ENCODE measurements at regions of chr2 and their contacts with region 1.

Region 1: DNA sequence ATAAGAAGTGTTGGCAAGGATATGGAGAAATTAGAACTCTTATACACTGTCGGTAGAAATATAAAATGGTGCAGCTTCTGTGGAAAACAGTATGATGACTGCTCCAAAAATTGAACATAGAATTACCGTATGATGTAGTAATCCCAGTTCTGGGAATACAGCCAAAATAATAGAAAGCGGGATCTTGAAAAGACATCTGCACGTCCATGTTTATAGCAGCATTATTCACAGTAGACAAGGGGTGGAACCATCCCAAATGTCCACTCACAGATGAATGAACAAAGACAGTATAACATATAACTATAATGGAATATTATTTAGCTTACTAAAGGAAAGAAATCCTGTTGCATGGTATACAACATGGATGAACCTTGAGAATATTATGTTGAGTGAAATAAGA is 257.7 kb downstream of the TDRD15 start:
- DNase-seq: no peak
- H3K4me3 ChIP-seq: no peak overlapping the region
- H3K27ac ChIP-seq: no peak overlapping the region
- H3K4me1 ChIP-seq: no peaks in the 10 kb centered on the region
- H3K27me3 ChIP-seq: no peaks in the 10 kb centered on the region
- CTCF ChIP-seq: no peak
- EP300 ChIP-seq: no peak
- RAD21 ChIP-seq: no peak

Region 2: GRCh38 chr2:20868377-20868776 is 513.0 kb before region 1 on chr2:
- CTCF ChIA-PET with region 1: no interaction called
- POLR2A ChIA-PET with region 1: no interaction called
- DNase-seq: no peak
- H3K4me3 ChIP-seq: no peak overlapping the region
- H3K27ac ChIP-seq: no peak overlapping the region
- H3K4me1 ChIP-seq: no peaks in the 10 kb centered on the region
- H3K27me3 ChIP-seq: no peaks in the 10 kb centered on the region
- CTCF ChIP-seq: no peak
- EP300 ChIP-seq: no peak
- RAD21 ChIP-seq: no peak

Region 3: DNA sequence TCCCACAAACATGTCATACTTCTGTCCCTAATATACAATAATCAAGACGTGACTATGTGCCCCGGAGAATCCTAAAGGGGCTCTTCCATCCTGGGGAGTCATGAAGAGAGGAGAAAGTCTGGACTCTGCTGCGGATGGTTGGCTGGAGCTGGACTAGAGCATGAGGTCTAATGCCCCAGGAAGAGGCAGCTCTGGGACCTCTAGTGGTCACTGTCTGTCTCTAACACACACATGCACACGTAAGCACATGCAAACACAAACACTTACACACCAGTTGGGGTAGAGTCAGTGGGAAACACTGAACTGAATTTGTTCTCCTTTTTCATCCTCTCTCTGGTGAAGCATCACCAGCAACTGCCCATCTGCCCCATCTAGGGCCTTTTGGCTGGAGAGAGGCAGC is 13.9 kb after region 1 on chr2:
- CTCF ChIA-PET with region 1: interaction called, 30 read pairs
- POLR2A ChIA-PET with region 1: no interaction called
- DNase-seq: peak; percentile 29
- H3K4me3 ChIP-seq: no peak overlapping the region
- H3K27ac ChIP-seq: no peak overlapping the region
- H3K4me1 ChIP-seq: peaks cover 0 to 6% of the 10 kb centered on the region in 2 experiments; a peak in 1 of 4 replicates
- H3K27me3 ChIP-seq: no peaks in the 10 kb centered on the region
- CTCF ChIP-seq: no peak
- EP300 ChIP-seq: no peak
- RAD21 ChIP-seq: peak; percentile 61

Region 4: DNA sequence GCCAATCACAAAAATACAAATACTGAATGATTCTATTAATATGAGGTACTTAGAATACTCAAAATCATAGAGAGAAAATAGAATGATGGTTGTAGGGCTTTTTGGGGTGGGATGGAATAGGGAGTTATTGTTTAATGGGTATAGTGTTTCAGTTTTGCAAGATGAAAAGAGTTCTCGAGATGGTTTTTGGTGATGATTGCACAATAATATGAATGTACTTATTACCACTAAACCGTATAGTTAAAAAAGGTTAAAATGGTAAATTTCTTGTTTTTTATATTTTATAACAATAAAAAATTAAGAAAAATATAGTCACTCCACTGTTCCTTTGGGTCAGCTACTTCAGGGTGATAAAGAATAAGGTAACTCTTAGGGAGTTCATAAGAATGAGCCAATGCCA is 302.4 kb after region 1 on chr2:
- CTCF ChIA-PET with region 1: no interaction called
- POLR2A ChIA-PET with region 1: no interaction called
- DNase-seq: no peak
- H3K4me3 ChIP-seq: no peak overlapping the region
- H3K27ac ChIP-seq: no peak overlapping the region
- H3K4me1 ChIP-seq: no peaks in the 10 kb centered on the region
- H3K27me3 ChIP-seq: no peaks in the 10 kb centered on the region
- CTCF ChIP-seq: no peak
- EP300 ChIP-seq: no peak
- RAD21 ChIP-seq: no peak

Measured in SK-N-SH (cell line).